Dendritic cell treated with granulocyte-macrophage colony-stimulating factor and Interleukin-4, amounts not matched to agents 40 ng/mL and 50 ng/mL, for 4 days (primary cell): ENCODE measurements at regions of chr3 and their contacts with region 1.

Region 1: DNA sequence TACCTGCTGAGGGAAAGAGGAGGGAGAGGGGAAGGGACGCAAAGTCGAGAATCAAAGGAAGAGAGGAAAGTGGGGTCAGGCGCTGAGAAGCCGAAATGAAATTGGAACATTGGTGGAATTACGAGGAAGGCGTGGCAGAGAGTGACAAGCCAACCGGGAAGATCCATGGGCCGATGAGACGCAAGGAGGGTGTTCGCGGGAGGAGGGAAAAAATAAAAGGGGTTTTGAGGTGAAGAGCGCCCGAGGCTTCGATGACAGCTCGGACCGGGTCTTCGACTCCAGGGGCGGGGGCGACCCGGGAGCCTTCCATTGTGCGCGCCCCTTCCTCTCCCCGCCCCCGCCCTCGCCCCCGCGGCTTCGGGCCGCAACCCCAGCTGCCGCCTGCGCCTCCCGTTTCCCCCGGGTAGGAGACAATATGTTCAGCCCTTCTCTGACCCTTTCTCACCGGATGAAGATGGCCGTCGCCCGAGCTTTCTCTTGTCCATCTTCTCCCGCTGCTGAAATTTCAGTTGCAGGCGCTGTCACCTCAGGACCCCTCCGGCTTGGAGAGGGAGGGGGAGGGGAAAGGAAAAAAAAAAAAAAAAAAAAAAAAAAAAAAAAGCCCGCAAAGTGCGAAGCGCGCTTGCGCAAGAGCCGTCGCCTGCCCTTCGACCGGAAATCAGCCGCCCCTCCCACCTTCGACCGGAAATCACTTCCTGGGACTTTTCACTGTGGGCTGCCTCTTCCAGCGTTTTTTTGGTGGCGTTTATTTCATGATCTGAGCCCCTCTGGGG is at the start of gene SENP7:
- H3K4me3 Mint-ChIP-seq: peak within 1 kb of the TSS; percentile 95
- H3K27ac Mint-ChIP-seq: peak within 1 kb of the TSS; percentile 91
- H3K4me1 Mint-ChIP-seq: peaks cover 19% of the 10 kb centered on the region
- H3K27me3 Mint-ChIP-seq: no peaks in the 10 kb centered on the region

Region 2: GRCh38 chr3:100386437-100387074 is 1126.3 kb before region 1 on chr3:
- intact Hi-C with region 1: no loop called
- H3K4me3 Mint-ChIP-seq: no peak overlapping the region
- H3K27ac Mint-ChIP-seq: no peak overlapping the region
- H3K4me1 Mint-ChIP-seq: no peaks in the 10 kb centered on the region
- H3K27me3 Mint-ChIP-seq: no peaks in the 10 kb centered on the region

Region 3: GRCh38 chr3:101531473-101532086 is 18.7 kb after region 1 on chr3:
- intact Hi-C with region 1: no loop called
- H3K4me3 Mint-ChIP-seq: no peak overlapping the region
- H3K27ac Mint-ChIP-seq: no peak overlapping the region
- H3K4me1 Mint-ChIP-seq: no peaks in the 10 kb centered on the region
- H3K27me3 Mint-ChIP-seq: no peaks in the 10 kb centered on the region

Region 4: DNA sequence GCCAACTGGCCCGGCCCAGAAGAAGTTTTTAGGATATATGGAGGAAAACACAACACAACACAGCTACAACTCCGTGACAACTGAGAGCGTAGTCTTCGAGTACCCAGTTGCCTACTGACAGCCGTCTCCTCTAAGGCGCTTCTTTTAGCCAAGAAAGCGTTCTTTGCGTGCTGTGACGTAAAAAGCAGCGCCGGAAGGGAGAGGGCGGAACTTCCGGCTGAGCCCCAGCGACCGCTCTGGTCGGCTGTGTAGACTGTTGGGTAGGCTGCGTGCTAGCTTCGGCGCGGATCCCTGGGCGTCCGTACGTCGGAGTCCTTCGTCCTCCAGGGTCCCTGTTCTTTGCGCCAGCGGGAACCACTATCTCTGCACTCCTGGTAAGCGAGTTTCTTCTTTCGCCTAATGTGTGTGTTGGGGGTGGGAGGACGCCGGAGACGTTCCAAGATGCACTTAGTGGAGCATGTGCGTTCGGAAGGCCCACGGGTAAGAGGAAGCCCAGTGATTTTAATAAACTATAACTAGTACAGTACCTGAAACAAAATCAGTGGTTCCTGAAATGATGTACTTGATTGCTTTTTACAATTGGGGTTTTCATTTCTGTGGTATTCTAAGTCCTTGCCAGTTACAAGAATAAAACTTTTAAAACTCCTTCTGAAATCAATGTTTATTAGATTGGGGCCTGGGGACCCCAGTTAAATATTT is 48.9 kb after region 1 on chr3 and contains the start of gene TRMT10C:
- intact Hi-C with region 1: loop called (anchors 2 kb)
- H3K4me3 Mint-ChIP-seq: peak within 1 kb of the TSS; percentile 95
- H3K27ac Mint-ChIP-seq: peak within 1 kb of the TSS; percentile 94
- H3K4me1 Mint-ChIP-seq: peaks cover 32% of the 10 kb centered on the region
- H3K27me3 Mint-ChIP-seq: peaks cover 14% of the 10 kb centered on the region